PC-9 (cell line): ENCODE measurements at regions of chr2 and their contacts with region 1.

Region 1: GRCh38 chr2:48715042-48715899 is 40.3 kb downstream of the LHCGR start:
- DNase-seq: peak in 1 of 2 experiments; percentile 74
- H3K4me3 ChIP-seq: no peak overlapping the region
- H3K27ac ChIP-seq: no peak overlapping the region
- H3K4me1 ChIP-seq: no peaks in the 10 kb centered on the region
- H3K27me3 ChIP-seq: no peaks in the 10 kb centered on the region
- CTCF ChIP-seq: no peak

Region 2: DNA sequence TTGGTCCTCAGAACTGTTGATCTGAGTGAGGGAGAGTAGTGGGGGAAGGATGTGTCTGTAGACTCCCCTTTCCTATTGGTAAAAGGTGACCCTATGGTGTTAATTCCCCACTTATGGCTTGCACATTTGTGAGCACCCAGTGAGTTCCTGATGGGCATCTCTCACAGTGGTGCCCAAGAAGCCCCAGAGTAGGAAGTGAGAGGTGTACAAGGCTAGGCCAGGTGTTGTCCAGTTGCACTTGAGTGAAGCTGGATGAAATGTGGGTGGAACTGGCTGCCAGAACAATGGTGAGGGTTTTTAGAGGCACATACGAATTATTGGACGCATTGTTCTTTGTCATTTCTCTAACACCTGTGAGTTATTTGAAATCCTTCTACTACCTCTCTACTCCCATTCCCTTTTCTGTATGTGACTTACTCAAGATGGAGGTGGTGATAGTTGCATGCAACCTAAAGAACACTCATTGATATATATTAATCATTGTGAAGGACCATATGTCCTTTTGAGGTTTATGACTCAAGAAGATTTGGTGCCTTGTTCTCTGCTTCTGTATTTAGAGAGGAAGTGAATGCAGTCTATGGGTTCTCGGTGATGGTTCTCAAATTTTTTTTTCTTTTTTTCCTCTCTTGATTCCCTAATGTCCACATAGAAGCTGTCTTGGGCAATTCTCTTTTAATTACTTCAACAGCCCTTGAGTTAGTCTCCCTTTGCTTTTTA is 276.3 kb after region 1 on chr2:
- CTCF ChIA-PET with region 1: no interaction called
- POLR2A ChIA-PET with region 1: interaction called, 43 read pairs
- intact Hi-C with region 1: no loop called
- DNase-seq: no peak
- H3K4me3 ChIP-seq: no peak overlapping the region
- H3K27ac ChIP-seq: no peak overlapping the region
- H3K4me1 ChIP-seq: no peaks in the 10 kb centered on the region
- H3K27me3 ChIP-seq: no peaks in the 10 kb centered on the region
- CTCF ChIP-seq: no peak